Mammary epithelial cell (primary cell): ENCODE measurements at regions of chr12 and their contacts with region 1.

Region 1: DNA sequence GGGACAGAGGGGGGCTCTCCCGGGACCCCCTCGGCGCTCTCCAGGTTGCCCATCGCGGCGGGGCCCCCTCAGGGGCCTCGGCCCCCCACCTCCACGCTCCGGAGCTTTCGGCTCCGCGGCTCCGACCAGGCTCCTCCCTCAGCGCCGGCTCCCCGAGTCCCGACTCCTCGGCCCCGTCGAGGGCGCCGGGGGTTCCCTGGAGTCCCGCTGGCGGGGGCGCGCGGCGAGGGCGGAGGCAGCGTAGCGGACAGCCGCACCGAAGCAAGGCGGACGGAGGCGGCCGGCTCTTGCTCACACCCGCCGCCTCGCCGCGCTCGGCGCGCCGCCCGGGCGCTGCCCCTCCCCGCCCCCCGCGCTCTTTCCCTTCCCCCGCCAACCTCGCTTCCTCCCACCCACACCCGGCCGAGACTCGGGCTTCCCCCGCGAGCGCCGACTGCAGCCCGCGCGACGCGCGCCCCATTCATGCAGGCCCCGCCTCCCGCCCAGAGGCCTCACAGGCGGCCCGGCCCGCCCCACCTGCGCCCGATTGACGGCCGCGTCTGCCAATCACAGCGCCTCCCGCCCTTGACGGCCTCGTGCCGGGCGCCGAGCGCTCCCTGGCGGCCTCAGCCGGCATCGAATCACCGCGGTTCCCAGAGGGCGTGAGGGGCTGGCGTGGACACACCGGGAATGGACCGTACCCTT is at the start of gene FMNL3:
- DNase-seq: peak; percentile 95
- H3K4me3 ChIP-seq: peak within 1 kb of the TSS; percentile 74 to 85 (median 85)
- H3K27ac ChIP-seq: peak within 1 kb of the TSS; percentile 59
- H3K4me1 ChIP-seq: peaks cover 31% of the 10 kb centered on the region
- H3K27me3 ChIP-seq: no peaks in the 10 kb centered on the region
- CTCF ChIP-seq: peak; percentile 84 to 96
- total RNA-seq, gene FMNL3: 17.6 to 32.0 TPM

Region 2: DNA sequence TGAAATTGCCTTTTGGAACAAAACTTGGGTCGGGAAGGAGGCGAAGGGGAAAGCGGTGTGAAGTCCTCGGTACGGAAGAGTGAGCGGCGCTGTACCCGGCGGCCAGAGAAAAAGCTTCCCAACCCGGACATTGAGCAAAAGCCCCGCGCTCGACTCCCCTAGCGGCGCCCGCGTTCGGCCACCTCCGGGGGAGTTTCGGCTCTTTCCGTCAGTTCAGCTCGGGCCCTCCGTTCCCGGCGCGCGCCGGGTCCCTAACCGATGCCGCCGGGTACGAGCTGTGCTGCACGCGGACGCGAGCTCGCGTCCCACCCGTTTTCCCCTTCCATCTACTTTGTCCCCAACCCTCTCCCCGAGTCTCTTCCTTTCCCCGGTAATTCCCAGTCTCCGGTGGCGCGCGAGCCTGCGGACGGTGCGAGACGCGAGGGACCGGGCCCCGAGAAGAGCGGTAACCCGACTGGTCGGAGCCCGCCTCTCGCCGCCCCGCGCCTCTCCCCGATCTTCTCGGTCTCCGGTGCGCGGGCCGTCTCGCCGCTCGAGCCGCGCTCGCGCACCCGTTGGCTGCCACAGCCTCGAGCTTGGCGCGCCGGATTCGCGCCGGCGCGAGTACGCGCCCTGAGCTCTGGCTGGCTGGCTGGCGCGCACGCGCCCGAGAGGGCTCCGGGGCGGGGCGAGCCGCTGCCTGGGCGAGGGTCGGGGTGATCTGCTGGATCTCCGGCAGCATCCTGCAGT is 340.5 kb before region 1 on chr12:
- CTCF ChIA-PET with region 1: no interaction called
- dilution Hi-C with region 1: no loop called
- in situ Hi-C with region 1: no loop called
- intact Hi-C with region 1: loop called (anchors 5 kb)
- DNase-seq: peak; percentile 94
- H3K4me3 ChIP-seq: peak overlapping the region; percentile 65 to 73 (median 72)
- H3K27ac ChIP-seq: peak overlapping the region; percentile 77
- H3K4me1 ChIP-seq: peaks cover 28% of the 10 kb centered on the region
- H3K27me3 ChIP-seq: no peaks in the 10 kb centered on the region
- CTCF ChIP-seq: peak in 1 of 2 donors; percentile 28

Region 3: DNA sequence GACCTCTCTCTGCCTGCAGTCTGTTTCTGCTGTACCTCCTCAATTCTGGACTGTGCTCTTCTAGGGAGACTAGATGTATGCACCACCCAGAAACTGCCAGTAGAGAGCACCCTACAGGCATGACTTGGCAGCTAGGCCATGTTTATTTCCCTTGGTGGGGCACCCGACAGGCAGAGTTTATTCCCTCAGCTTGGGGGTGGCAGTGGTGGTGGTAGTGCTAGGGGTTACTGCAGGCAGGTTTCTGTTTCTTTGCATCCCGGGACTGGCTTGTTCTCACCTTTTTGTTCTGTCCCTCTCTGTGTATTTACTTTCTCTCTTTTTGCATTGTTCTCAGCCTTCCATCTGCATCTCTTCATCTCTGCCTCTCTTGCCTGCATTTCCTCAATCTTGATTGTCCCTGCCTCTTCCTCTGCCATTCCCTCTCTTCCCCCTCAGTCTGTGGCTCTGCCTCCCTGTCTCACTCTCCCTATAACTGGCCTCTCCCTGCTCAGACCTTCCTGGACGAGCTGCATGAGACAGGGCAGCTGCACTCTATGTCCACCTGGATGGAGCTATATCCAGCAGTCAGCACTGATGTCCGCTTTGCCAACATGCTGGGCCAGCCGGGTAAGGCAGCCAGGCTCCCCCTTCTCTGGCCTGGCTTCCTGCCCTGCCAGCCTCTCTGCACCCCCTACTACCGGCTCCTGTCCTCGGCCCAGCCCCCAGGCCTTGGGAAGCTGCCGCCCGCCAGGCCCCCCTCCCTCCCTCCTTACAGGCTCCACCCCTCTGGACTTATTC is 70.1 kb before region 1 on chr12:
- CTCF ChIA-PET with region 1: interaction called, 3 read pairs
- dilution Hi-C with region 1: loop called (anchors 5 kb)
- in situ Hi-C with region 1: loop called (anchors 5 kb)
- intact Hi-C with region 1: loop called (anchors 2 kb)
- DNase-seq: peak; percentile 46
- H3K4me3 ChIP-seq: no peak overlapping the region
- H3K27ac ChIP-seq: no peak overlapping the region
- H3K4me1 ChIP-seq: no peaks in the 10 kb centered on the region
- H3K27me3 ChIP-seq: no peaks in the 10 kb centered on the region
- CTCF ChIP-seq: peak; percentile 79 to 90

Region 4: GRCh38 chr12:49673446-49674317 is 33.6 kb before region 1 on chr12:
- CTCF ChIA-PET with region 1: no interaction called
- dilution Hi-C with region 1: no loop called
- in situ Hi-C with region 1: no loop called
- intact Hi-C with region 1: loop called (anchors 2 kb)
- DNase-seq: peak; percentile 71
- H3K4me3 ChIP-seq: no peak overlapping the region
- H3K27ac ChIP-seq: peak overlapping the region; percentile 17
- H3K4me1 ChIP-seq: peaks cover 21% of the 10 kb centered on the region
- H3K27me3 ChIP-seq: no peaks in the 10 kb centered on the region
- CTCF ChIP-seq: peak; percentile 2 to 16

Region 5: DNA sequence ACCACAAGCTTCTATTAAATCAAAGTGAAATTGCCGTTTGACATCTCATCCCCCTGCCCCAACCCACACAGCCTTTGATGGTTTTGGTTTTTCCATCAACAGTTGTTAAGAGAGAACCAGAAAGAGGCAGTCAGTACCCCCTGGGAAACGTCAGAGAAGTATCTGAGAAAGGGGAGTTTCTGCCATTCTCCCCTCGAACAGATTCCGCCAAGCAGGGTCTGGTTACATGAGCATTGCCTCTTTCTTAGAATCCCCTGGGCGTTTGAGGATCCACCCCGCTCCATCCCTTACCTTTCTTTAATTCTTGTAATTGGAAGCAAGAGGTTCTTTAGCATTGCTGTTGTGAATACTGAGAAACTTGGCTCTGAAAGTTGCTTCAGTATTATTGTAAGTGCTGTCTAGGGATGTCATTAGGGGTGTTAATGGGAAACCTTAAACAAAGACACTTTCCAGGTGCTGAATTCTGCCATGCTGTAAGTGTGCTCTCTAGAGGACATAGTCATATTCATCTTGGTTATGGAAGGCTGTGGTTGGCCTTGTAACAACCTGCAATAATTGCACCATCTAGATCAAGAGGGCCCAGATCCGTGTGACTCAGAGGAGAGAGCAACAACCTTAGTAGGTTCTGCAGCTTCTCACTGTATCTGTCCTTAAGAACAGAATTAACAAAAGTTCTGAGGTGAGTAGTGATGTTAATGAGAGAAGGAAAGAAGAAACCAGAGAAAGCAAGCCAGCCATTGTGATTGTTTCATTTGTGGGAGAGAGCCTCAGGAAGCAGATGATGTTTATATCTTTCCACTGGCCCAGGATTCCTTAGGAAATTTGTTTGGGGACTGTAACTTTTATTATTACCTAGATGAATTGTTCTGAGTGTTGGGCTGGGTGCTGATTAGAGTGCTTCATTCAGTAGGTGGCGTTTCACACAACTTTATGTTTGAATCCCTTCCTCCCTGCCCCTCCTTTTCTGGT is 43.0 kb after region 1 on chr12:
- CTCF ChIA-PET with region 1: no interaction called
- dilution Hi-C with region 1: loop called (anchors 5 kb)
- in situ Hi-C with region 1: no loop called
- intact Hi-C with region 1: loop called (anchors 2 kb)
- DNase-seq: peak; percentile 90
- H3K4me3 ChIP-seq: peak overlapping the region in 1 of 3 experiments; percentile 19
- H3K27ac ChIP-seq: peak overlapping the region; percentile 54
- H3K4me1 ChIP-seq: peaks cover 21% of the 10 kb centered on the region
- H3K27me3 ChIP-seq: no peaks in the 10 kb centered on the region
- CTCF ChIP-seq: peak; percentile 14 to 40